HepG2 (cell line): ENCODE measurements at regions of chr6 and their contacts with region 1.

Region 1: DNA sequence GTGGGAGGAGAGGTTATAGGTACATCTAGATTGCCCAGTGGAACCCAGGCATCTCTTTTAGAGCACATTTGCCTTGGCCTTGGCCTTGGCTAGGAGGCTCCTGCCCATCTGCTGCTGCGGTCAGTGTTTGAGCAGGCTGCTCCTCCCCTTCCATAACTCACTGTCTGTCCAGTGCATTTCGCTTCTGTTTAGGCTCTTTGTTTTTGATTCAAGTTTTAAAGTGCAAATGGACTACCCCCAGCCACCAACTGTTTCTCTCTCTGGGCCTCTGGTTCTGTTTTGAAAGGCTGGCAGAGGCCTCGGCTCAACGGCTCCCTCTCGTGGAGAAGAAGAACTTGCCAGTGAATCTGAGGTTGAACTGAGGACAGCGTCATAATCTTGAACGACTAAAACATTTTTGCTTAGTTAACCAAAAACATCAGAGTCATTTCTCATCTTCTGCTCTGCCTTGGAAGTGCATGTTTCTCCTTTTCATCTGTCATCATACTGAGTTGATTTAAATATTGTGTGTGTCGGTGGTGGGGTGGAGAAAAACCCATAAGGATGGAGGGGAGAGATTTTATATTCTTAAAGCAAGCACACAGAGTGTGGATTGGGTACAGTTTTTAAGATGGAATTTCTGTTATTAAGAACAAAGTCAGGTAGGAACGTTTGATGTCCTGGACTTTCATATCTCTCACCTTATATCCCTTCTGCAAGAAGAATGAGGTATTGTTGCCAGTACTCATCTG is 171.4 kb downstream of the DTNBP1 start:
- DNase-seq: peak; percentile 94
- ATAC-seq: peak; percentile 92
- H3K4me3 ChIP-seq: no peak overlapping the region
- H3K27ac ChIP-seq: no peak overlapping the region
- H3K4me1 ChIP-seq: peaks cover 28% of the 10 kb centered on the region
- H3K27me3 ChIP-seq: no peaks in the 10 kb centered on the region
- CTCF ChIP-seq: peak; percentile 91
- EP300 ChIP-seq: peak in 1 of 2 experiments; percentile 59; a peak in 1 of 4 replicates
- POLR2A ChIP-seq: no peak
- RAD21 ChIP-seq: peak; percentile 80

Region 2: GRCh38 chr6:15429141-15430110 is 62.0 kb before region 1 on chr6:
- CTCF ChIA-PET with region 1: no interaction called
- POLR2A ChIA-PET with region 1: no interaction called
- in situ Hi-C with region 1: no loop called
- intact Hi-C with region 1: loop called (anchors 5 kb)
- DNase-seq: peak; percentile 63
- ATAC-seq: peak; percentile 31
- H3K4me3 ChIP-seq: no peak overlapping the region; a peak in 1 of 6 replicates
- H3K27ac ChIP-seq: peak overlapping the region; percentile 48
- H3K4me1 ChIP-seq: peaks cover 57% of the 10 kb centered on the region
- H3K27me3 ChIP-seq: no peaks in the 10 kb centered on the region
- CTCF ChIP-seq: no peak
- EP300 ChIP-seq: no peak
- POLR2A ChIP-seq: no peak
- RAD21 ChIP-seq: no peak